Activated CD4-positive, alpha-beta memory T cell treated with anti-CD3 and anti-CD28 coated beads for 36 hours (primary cell): ENCODE measurements at regions of chr12 and their contacts with region 1.

Region 1: GRCh38 chr12:4526923-4527546 is 11.7 kb upstream of the RAD51AP1 start:
- DNase-seq: no peak
- H3K4me3 Mint-ChIP-seq: no peak overlapping the region
- H3K27ac Mint-ChIP-seq: no peak overlapping the region
- H3K4me1 Mint-ChIP-seq: peaks cover 5% of the 10 kb centered on the region
- H3K27me3 Mint-ChIP-seq: no peaks in the 10 kb centered on the region

Region 2: DNA sequence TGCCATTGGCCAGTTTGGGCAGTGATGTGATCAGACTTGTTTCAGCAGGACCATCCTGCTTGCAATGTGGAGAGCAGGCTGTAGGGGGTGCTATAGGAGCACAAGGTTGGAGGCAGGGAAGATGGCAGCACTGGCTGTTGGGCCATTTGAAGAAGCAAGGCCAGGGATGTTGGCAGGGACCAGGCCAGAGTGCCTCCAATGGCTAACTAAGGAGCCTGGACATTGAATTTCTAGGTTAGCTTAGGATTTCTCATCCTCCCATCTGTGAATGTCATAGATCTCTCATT is 171.1 kb before region 1 on chr12:
- CTCF ChIA-PET with region 1: interaction called, 5 read pairs
- POLR2A ChIA-PET with region 1: no interaction called
- intact Hi-C with region 1: loop called (anchors 2 kb)
- DNase-seq: peak; percentile 79
- H3K4me3 Mint-ChIP-seq: no peak overlapping the region
- H3K27ac Mint-ChIP-seq: no peak overlapping the region
- H3K4me1 Mint-ChIP-seq: peaks cover 3% of the 10 kb centered on the region
- H3K27me3 Mint-ChIP-seq: no peaks in the 10 kb centered on the region

Region 3: DNA sequence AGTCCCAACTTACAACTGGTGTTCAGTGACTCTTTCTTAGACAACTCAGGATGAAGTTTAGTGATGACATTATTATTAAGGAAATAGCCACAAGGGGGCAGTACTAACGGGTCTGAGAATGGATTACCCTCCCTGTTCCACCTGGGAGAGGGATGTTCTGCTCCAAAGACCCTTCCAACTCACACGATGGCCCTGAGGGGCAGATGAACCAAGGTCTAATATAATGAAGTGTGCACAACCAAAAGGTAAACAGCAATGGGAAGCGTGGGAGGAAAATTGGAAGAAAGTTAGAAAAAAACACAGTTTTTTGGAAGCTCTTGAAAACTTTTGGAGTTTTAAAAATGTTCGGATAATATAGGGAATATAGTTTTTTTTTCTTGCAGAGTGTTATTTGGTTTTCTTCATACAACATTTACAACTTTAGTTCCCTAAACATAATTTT is 105.4 kb before region 1 on chr12:
- CTCF ChIA-PET with region 1: interaction called, 64 read pairs
- POLR2A ChIA-PET with region 1: no interaction called
- intact Hi-C with region 1: loop called (anchors 1 kb)
- DNase-seq: no peak
- H3K4me3 Mint-ChIP-seq: no peak overlapping the region
- H3K27ac Mint-ChIP-seq: no peak overlapping the region
- H3K4me1 Mint-ChIP-seq: no peaks in the 10 kb centered on the region
- H3K27me3 Mint-ChIP-seq: peaks cover 8% of the 10 kb centered on the region